ENCODE measurements at regions of chr1 and their contacts with region 1.

Region 1: GRCh38 chr1:1890506-1891348 is at the start of gene GNB1:
- DNase-seq: peak; percentile 89
- H3K4me3 Mint-ChIP-seq: peak within 1 kb of the TSS; percentile 90
- H3K27ac Mint-ChIP-seq: peak within 1 kb of the TSS; percentile 88
- H3K4me1 Mint-ChIP-seq: peaks cover 51% of the 10 kb centered on the region
- H3K27me3 Mint-ChIP-seq: no peaks in the 10 kb centered on the region
- total RNA-seq, gene GNB1: 382 and 398 TPM in 2 replicates

Region 2: GRCh38 chr1:1777950-1778662 is 112.6 kb before region 1 on chr1 and contains the start of gene NADK:
- intact Hi-C with region 1: loop called (anchors 2 kb)
- DNase-seq: peak; percentile 81
- H3K4me3 Mint-ChIP-seq: peak within 1 kb of the TSS; percentile 90
- H3K27ac Mint-ChIP-seq: peak within 1 kb of the TSS; percentile 87
- H3K4me1 Mint-ChIP-seq: peaks cover 53% of the 10 kb centered on the region
- H3K27me3 Mint-ChIP-seq: no peaks in the 10 kb centered on the region
- total RNA-seq, gene NADK: 95.5 and 96.8 TPM in 2 replicates

Region 3: GRCh38 chr1:1826356-1827088 is 64.2 kb before region 1 on chr1:
- intact Hi-C with region 1: loop called (anchors 1 kb)
- DNase-seq: no peak
- H3K4me3 Mint-ChIP-seq: no peak overlapping the region
- H3K27ac Mint-ChIP-seq: peak overlapping the region; percentile 56
- H3K4me1 Mint-ChIP-seq: peaks cover 27% of the 10 kb centered on the region
- H3K27me3 Mint-ChIP-seq: no peaks in the 10 kb centered on the region

Region 4: DNA sequence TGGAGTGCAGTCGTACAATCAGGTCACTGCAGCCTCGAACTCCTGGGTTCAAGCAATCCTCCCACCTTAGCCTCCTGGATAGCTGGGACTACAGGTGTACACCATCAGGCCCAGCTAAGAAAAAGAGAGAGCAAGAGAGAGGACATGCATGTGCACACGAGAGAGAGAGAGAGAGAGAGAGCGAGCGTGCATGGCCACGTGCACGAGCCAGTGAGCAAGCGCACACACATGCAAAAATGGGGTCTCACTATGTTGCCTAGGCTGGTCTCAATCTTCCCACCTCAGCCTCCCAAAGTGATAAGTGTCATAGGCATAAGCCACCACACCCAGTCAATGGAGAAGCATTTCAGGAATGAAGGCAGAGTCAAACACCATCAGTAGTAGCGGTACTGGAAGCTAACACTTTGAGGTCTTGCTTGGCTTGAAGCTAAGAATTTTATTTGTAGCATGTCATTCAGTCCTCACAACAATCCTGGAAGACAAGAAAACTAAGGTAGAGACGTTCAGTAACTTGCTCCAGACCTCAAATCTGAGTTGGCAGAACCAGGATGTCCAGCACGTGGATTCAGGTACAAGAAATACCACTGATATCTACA is 14.3 kb before region 1 on chr1:
- intact Hi-C with region 1: loop called (anchors 2 kb)
- DNase-seq: no peak
- H3K4me3 Mint-ChIP-seq: peak overlapping the region; percentile 58
- H3K27ac Mint-ChIP-seq: peak overlapping the region; percentile 89
- H3K4me1 Mint-ChIP-seq: peaks cover 58% of the 10 kb centered on the region
- H3K27me3 Mint-ChIP-seq: no peaks in the 10 kb centered on the region

Region 5: GRCh38 chr1:1906185-1907097 is 15.7 kb after region 1 on chr1:
- intact Hi-C with region 1: loop called (anchors 1 kb)
- DNase-seq: peak; percentile 61
- H3K4me3 Mint-ChIP-seq: peak overlapping the region; percentile 68
- H3K27ac Mint-ChIP-seq: peak overlapping the region; percentile 76
- H3K4me1 Mint-ChIP-seq: peaks cover 16% of the 10 kb centered on the region
- H3K27me3 Mint-ChIP-seq: peaks cover 2% of the 10 kb centered on the region

Region 6: GRCh38 chr1:1919304-1920056 is 28.8 kb after region 1 on chr1:
- intact Hi-C with region 1: loop called (anchors 1 kb)
- DNase-seq: peak; percentile 99
- H3K4me3 Mint-ChIP-seq: peak overlapping the region; percentile 64
- H3K27ac Mint-ChIP-seq: peak overlapping the region; percentile 70
- H3K4me1 Mint-ChIP-seq: no peaks in the 10 kb centered on the region
- H3K27me3 Mint-ChIP-seq: peaks cover 2% of the 10 kb centered on the region

Region 7: GRCh38 chr1:1943834-1944570 is 53.3 kb after region 1 on chr1:
- intact Hi-C with region 1: no loop called
- DNase-seq: peak; percentile 24
- H3K4me3 Mint-ChIP-seq: no peak overlapping the region
- H3K27ac Mint-ChIP-seq: no peak overlapping the region
- H3K4me1 Mint-ChIP-seq: no peaks in the 10 kb centered on the region
- H3K27me3 Mint-ChIP-seq: no peaks in the 10 kb centered on the region

Region 8: GRCh38 chr1:2212542-2213491 is 322.1 kb after region 1 on chr1:
- intact Hi-C with region 1: no loop called
- DNase-seq: peak; percentile 52
- H3K4me3 Mint-ChIP-seq: no peak overlapping the region
- H3K27ac Mint-ChIP-seq: no peak overlapping the region
- H3K4me1 Mint-ChIP-seq: no peaks in the 10 kb centered on the region
- H3K27me3 Mint-ChIP-seq: no peaks in the 10 kb centered on the region

Measured in activated T-helper 1 cell treated with anti-CD3 and anti-CD28 coated beads, Interleukin-12 subunit alpha, Interleukin-12 subunit beta, Interleukin-2, Interleukin-4 antibody, amounts not matched to agents 30 ng/mL and 10 ng/mL and 1 ng/mL, durations not matched to agents 14 hours and 24 hours and 36 hours (primary cell).